Endothelial cell of umbilical vein (primary cell): ENCODE measurements at regions of chr13 and their contacts with region 1.

Region 1: DNA sequence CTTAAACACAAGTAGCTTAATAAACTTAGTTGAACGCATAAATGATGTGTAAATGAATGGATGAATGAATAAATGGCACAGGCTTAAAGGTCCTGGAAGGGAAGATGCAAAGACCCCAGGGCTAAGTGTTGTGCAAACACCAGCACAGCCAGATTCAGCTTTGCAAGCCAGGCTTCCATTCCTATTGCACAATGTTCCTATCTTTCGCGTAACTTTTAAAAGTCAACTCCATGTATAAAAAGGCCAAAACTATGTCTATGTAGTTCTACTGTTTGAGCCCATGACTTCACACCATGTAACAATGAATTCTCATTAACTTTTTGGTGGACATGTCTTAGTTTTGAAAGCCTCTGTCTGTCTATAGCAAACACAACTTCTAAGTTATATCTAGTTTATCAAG is 226.0 kb downstream of the NALCN start:
- DNase-seq: no peak
- H3K4me3 ChIP-seq: no peak overlapping the region
- H3K27ac ChIP-seq: no peak overlapping the region
- H3K4me1 ChIP-seq: no peaks in the 10 kb centered on the region
- H3K27me3 ChIP-seq: no peaks in the 10 kb centered on the region
- CTCF ChIP-seq: no peak
- POLR2A ChIP-seq: no peak

Region 2: DNA sequence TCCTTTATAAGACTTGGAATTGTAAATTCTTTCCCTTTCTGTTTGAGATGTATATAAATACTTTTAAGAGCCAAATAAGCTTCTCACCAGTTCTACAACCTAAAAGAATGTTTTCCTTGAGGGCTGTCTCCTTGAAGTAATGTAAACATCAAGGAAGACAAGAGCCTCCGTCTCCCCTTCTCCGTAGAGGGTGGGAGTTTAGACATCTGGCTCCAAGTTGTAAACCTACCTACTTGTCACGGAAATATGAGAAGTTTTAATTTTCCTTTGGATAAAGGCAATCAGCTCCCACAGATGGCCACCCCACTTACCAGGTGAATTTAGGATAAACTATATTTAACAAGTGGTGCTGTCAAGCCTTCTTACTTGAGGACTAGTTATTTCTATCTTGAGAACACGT is 11.9 kb before region 1 on chr13:
- CTCF ChIA-PET with region 1: no interaction called
- POLR2A ChIA-PET with region 1: no interaction called
- dilution Hi-C with region 1: no loop called
- intact Hi-C with region 1: loop called (anchors 1 kb)
- DNase-seq: no peak
- H3K4me3 ChIP-seq: no peak overlapping the region
- H3K27ac ChIP-seq: no peak overlapping the region
- H3K4me1 ChIP-seq: no peaks in the 10 kb centered on the region
- H3K27me3 ChIP-seq: no peaks in the 10 kb centered on the region
- CTCF ChIP-seq: no peak
- POLR2A ChIP-seq: no peak

Region 3: DNA sequence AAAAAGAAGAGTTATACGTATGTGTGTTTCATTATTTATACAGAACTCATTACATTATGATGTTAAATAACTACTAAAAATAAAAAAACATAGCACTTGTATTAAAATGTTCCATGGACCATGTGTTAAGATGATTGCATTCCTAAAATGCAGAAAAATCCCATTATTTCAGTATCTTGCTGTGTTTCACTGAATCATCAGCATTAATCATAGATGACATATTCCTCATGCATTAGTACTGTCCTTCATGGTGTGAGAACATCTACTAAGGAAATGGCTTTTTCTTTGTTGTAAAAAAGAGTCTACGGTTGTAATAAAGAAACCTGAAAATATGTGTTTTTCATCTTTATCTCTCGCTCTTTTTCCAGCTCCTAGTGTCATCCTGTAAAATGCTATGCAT is 795.0 kb after region 1 on chr13:
- CTCF ChIA-PET with region 1: no interaction called
- POLR2A ChIA-PET with region 1: no interaction called
- dilution Hi-C with region 1: no loop called
- intact Hi-C with region 1: no loop called
- DNase-seq: no peak
- H3K4me3 ChIP-seq: no peak overlapping the region
- H3K27ac ChIP-seq: no peak overlapping the region
- H3K4me1 ChIP-seq: no peaks in the 10 kb centered on the region
- H3K27me3 ChIP-seq: no peaks in the 10 kb centered on the region
- CTCF ChIP-seq: no peak
- POLR2A ChIP-seq: no peak